Naive thymus-derived CD4-positive, alpha-beta T cell (primary cell): ENCODE measurements at regions of chr4 and their contacts with region 1.

Region 1: GRCh38 chr4:122732329-122733026 is at the start of gene BBS12:
- DNase-seq: peak; percentile 90 to 99 (median 99)
- ATAC-seq: peak; percentile 99
- H3K4me3 ChIP-seq: peak within 1 kb of the TSS; percentile 97
- H3K4me3 Mint-ChIP-seq: peak within 1 kb of the TSS; percentile 80 to 100 (median 97)
- H3K27ac ChIP-seq: peak within 1 kb of the TSS; percentile 74
- H3K27ac Mint-ChIP-seq: peak within 1 kb of the TSS; percentile 92 to 99 (median 98)
- H3K4me1 ChIP-seq: peaks cover 9 to 17% of the 10 kb centered on the region in 2 donors
- H3K4me1 Mint-ChIP-seq: peaks cover 6 to 44% (median 36%) of the 10 kb centered on the region in 7 donors
- H3K27me3 ChIP-seq: no peaks in the 10 kb centered on the region
- H3K27me3 Mint-ChIP-seq: no peaks in the 10 kb centered on the region
- total RNA-seq, gene BBS12: 0.71 to 4.3 (median 2.3) TPM

Region 2: GRCh38 chr4:121800961-121801714 is 931.3 kb before region 1 on chr4 and contains the start of gene EXOSC9:
- CTCF ChIA-PET with region 1: no interaction called
- POLR2A ChIA-PET with region 1: interaction called, 5 read pairs
- intact Hi-C with region 1: loop called in 1 of 2 experiments (anchors 2 kb)
- DNase-seq: peak; percentile 88 to 98 (median 95)
- ATAC-seq: peak; percentile 92
- H3K4me3 ChIP-seq: peak within 1 kb of the TSS; percentile 92
- H3K4me3 Mint-ChIP-seq: peak within 1 kb of the TSS; percentile 89 to 99 (median 95)
- H3K27ac ChIP-seq: peak within 1 kb of the TSS; percentile 93
- H3K27ac Mint-ChIP-seq: peak within 1 kb of the TSS; percentile 97 to 100 (median 99)
- H3K4me1 ChIP-seq: peaks cover 16 to 20% of the 10 kb centered on the region in 2 donors
- H3K4me1 Mint-ChIP-seq: peaks cover 26 to 55% (median 50%) of the 10 kb centered on the region in 7 donors
- H3K27me3 ChIP-seq: no peaks in the 10 kb centered on the region
- H3K27me3 Mint-ChIP-seq: peaks cover 0 to 2% (median 0%) of the 10 kb centered on the region in 5 donors
- total RNA-seq, gene EXOSC9: 37.5 to 55.0 (median 44.2) TPM

Region 3: DNA sequence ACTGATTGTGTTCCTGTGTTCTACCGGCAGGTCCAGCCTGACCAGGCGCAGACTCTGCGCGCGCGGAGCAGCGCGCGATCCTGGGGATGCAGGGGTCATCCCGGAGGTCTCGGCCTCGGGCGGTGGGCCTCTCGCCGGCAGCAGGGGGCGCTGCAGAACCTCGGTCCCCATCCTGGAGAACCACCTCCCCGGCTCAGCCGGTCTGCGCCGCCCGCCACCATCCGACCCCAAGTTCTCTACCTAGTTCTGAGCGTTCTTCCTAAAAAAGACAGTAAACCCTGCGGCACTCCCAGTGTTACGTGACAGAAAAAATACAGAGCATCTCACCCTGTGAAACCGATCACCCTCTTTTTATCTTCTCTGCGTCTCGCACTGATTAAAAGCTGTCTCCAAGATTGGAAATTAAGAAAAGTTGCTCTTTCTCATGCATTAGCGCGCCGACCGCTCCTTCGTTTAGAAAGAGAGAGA is 782.2 kb before region 1 on chr4:
- CTCF ChIA-PET with region 1: no interaction called
- POLR2A ChIA-PET with region 1: no interaction called
- intact Hi-C with region 1: loop called in 1 of 2 experiments (anchors 5 kb)
- DNase-seq: peak; percentile 53 to 88 (median 68)
- ATAC-seq: peak; percentile 87
- H3K4me3 ChIP-seq: peak overlapping the region; percentile 50
- H3K4me3 Mint-ChIP-seq: peak overlapping the region; percentile 84 to 95 (median 88)
- H3K27ac ChIP-seq: no peak overlapping the region
- H3K27ac Mint-ChIP-seq: peak overlapping the region in 4 of 9 donors; percentile 10 to 45 (median 20)
- H3K4me1 ChIP-seq: no peaks in the 10 kb centered on the region
- H3K4me1 Mint-ChIP-seq: peaks cover 0 to 26% (median 17%) of the 10 kb centered on the region in 7 donors
- H3K27me3 ChIP-seq: peaks cover 0 to 11% of the 10 kb centered on the region in 2 donors
- H3K27me3 Mint-ChIP-seq: peaks cover 32 to 65% (median 47%) of the 10 kb centered on the region in 5 donors

Region 4: DNA sequence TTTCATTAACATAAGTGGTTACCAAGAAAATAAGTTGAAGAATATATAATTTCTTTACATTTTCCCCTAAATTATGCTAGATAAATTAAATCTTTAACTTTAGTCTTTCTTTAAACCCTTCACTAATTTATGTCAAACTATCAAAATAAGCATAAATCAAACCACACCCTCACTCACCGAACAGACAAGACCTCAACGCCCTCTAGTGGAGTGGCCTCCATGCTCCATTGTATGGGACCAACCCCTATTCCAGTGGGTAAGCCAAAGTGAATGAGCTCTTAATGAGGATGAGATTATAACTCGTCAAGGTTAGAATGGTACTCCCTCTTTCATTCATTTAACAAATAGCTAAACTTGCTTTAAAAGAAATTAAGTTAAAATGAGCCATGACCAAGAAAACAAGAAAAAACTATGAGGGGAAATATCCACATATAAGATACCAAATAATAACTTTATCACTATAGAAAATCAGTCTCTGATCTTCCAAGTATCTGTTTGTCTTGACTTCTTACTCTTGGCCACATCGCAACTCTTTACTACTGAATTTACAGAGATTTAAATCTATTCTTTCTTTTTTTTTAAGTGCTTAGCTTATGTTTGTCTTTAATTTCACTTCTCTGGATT is 15.5 kb before region 1 on chr4:
- CTCF ChIA-PET with region 1: interaction called, 13 read pairs
- POLR2A ChIA-PET with region 1: no interaction called
- intact Hi-C with region 1: loop called (anchors 1 kb)
- DNase-seq: peak; percentile 20 to 70 (median 63)
- ATAC-seq: peak; percentile 96
- H3K4me3 ChIP-seq: no peak overlapping the region
- H3K4me3 Mint-ChIP-seq: no peak overlapping the region
- H3K27ac ChIP-seq: no peak overlapping the region
- H3K27ac Mint-ChIP-seq: peak overlapping the region in 1 of 9 donors; percentile 46
- H3K4me1 ChIP-seq: peaks cover 0 to 5% of the 10 kb centered on the region in 2 donors
- H3K4me1 Mint-ChIP-seq: peaks cover 0 to 37% (median 12%) of the 10 kb centered on the region in 7 donors
- H3K27me3 ChIP-seq: no peaks in the 10 kb centered on the region
- H3K27me3 Mint-ChIP-seq: peaks cover 0 to 2% (median 0%) of the 10 kb centered on the region in 5 donors

Region 5: GRCh38 chr4:122827879-122828601 is 95.6 kb after region 1 on chr4:
- CTCF ChIA-PET with region 1: no interaction called
- POLR2A ChIA-PET with region 1: no interaction called
- intact Hi-C with region 1: loop called (anchors 1 to 2 kb)
- DNase-seq: peak in 7 of 9 donors; percentile 9 to 40 (median 27)
- ATAC-seq: peak; percentile 81
- H3K4me3 ChIP-seq: peak overlapping the region; percentile 44
- H3K4me3 Mint-ChIP-seq: peak overlapping the region; percentile 74 to 86 (median 84)
- H3K27ac ChIP-seq: no peak overlapping the region
- H3K27ac Mint-ChIP-seq: peak overlapping the region in 1 of 9 donors; percentile 27
- H3K4me1 ChIP-seq: peaks cover 5 to 8% of the 10 kb centered on the region in 2 donors
- H3K4me1 Mint-ChIP-seq: peaks cover 7 to 22% (median 11%) of the 10 kb centered on the region in 7 donors
- H3K27me3 ChIP-seq: peaks cover 10 to 16% of the 10 kb centered on the region in 2 donors
- H3K27me3 Mint-ChIP-seq: peaks cover 71 to 81% (median 80%) of the 10 kb centered on the region in 5 donors

Region 6: DNA sequence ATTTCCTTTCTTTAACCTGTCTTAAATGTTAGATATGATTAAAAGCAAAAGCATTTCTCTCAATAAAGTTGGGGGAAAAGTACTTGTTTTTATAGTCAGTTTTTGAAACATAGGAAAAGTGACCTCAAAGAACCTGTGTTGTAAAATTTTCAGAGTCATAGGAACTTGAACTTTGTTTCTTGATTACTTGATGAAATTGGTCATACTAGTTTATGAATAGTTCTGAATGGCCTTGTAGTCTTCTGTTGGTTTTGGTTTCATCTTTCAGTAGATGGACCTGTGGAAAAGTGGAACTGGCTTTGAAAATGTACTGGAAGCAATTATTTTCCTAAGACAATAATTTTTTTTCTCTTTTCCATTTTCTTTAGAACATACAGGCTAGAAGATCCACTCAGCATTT is 412.1 kb after region 1 on chr4:
- CTCF ChIA-PET with region 1: no interaction called
- POLR2A ChIA-PET with region 1: no interaction called
- intact Hi-C with region 1: no loop called
- DNase-seq: no peak
- ATAC-seq: no peak
- H3K4me3 ChIP-seq: no peak overlapping the region
- H3K4me3 Mint-ChIP-seq: no peak overlapping the region
- H3K27ac ChIP-seq: no peak overlapping the region
- H3K27ac Mint-ChIP-seq: no peak overlapping the region
- H3K4me1 ChIP-seq: no peaks in the 10 kb centered on the region
- H3K4me1 Mint-ChIP-seq: peaks cover 0 to 6% (median 0%) of the 10 kb centered on the region in 7 donors
- H3K27me3 ChIP-seq: no peaks in the 10 kb centered on the region
- H3K27me3 Mint-ChIP-seq: no peaks in the 10 kb centered on the region